ENCODE measurements at regions of chrX and their contacts with region 1.

Region 1: DNA sequence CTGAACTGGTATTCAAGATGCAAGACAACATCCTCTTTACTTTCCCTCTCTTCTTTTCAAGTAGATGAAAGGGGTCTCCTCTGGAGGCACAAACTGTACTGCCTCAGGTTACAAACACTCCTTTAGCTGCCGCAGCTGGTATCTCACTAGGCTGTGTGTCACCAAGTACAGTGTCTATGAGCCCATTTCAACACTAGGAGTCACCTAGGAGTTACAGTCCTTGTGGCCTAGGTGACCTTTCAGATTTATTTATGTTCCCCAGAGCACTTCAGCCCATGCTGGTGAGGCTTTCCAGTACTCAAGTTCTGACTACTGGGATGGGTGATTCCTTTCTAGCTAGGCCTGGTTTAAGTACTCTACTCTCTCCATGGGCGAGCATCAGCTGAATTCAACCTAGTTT is 32.4 kb upstream of the TMLHE start:
- DNase-seq: no peak
- ATAC-seq: no peak
- H3K4me3 ChIP-seq: no peak overlapping the region
- H3K27ac ChIP-seq: no peak overlapping the region
- H3K4me1 ChIP-seq: no peaks in the 10 kb centered on the region
- H3K27me3 ChIP-seq: no peaks in the 10 kb centered on the region
- CTCF ChIP-seq: no peak

Region 2: GRCh38 chrX:155956649-155957048 is 311.5 kb after region 1 on chrX:
- intact Hi-C with region 1: loop called in 1 of 10 experiments (anchors 1 kb)
- DNase-seq: peak in 1 of 2 donors; percentile 14
- ATAC-seq: no peak
- H3K4me3 ChIP-seq: no peak overlapping the region
- H3K27ac ChIP-seq: no peak overlapping the region
- H3K4me1 ChIP-seq: no peaks in the 10 kb centered on the region
- H3K27me3 ChIP-seq: peaks cover 0 to 3% (median 0%) of the 10 kb centered on the region in 7 donors
- CTCF ChIP-seq: no peak

Measured in heart right ventricle (tissue), 16 donors.